BJ (cell line): ENCODE measurements at regions of chr2 and their contacts with region 1.

Region 1: DNA sequence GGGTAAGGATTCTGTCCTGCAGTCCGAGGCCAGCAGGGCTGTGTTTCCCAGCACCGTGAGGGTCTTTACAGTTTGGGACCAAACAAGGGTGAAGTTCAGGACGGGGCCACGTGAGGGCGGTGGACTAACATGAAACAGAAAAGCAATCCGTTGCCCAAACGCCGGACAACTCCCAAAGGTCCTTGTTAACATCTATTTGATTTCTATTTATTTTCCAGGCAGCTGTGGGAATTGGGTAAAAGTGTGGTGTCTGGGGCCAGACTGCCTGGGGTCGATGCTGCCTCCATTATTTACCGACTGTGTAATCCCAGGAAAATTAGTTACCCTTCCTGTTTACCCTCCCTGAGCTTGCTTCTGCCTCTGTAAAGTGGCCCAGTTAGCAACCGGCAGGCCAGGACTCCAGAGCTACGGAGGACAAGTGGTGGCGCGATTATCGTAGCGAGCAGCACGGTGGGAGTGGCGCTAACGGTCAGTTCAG is 66.3 kb upstream of the TCF7L1 start:
- DNase-seq: peak; percentile 9
- H3K4me3 ChIP-seq: no peak overlapping the region; the same call in 1 of the 2 replicates
- H3K27me3 ChIP-seq: peaks cover 4% of the 10 kb centered on the region; the same call in 1 of the 2 replicates
- CTCF ChIP-seq: peak; percentile 87

Region 2: DNA sequence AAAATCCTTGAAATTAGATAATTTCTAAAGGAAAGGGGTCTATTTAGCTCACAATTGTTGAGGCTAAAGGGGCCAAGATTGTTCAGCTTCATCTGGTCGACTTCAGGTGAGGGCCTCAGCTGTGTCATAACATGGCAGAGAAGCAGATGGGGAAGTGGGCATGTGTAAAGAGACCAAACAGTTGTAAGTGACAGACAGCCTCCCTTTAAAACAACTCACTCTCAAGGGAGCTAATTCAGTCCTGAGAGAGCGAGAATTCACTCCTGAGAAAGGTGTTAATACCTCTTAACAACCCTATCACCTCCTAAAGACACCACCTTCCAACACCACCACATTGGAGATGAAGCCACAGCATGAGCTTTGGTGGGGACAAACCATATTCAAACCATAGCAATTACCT is 33.5 kb before region 1 on chr2:
- CTCF ChIA-PET with region 1: interaction called, 15 read pairs
- POLR2A ChIA-PET with region 1: no interaction called
- DNase-seq: no peak
- H3K4me3 ChIP-seq: no peak overlapping the region
- H3K27me3 ChIP-seq: no peaks in the 10 kb centered on the region
- CTCF ChIP-seq: no peak

Region 3: DNA sequence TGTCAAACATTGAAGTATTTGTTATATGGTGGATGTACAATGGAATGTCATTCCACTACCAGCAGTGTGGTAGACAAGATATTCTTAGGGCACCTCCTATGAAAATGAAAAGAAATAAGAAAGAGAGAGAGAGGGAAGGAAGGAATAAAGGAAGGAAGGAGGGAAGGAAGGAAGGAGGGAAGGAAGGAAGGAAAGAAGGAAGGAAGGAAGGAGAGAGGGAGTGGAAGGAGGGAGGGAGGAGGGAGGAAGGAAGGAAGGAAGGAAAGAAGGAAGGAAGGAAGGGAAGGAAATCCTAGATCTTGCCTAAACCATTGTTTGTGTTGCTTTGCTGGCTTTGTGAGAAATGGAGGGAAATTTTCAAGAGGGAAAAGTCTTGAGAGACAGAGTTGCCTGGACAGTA is 16.2 kb after region 1 on chr2:
- CTCF ChIA-PET with region 1: interaction called, 31 read pairs
- POLR2A ChIA-PET with region 1: no interaction called
- DNase-seq: no peak
- H3K4me3 ChIP-seq: no peak overlapping the region
- H3K27me3 ChIP-seq: peaks cover 3% of the 10 kb centered on the region
- CTCF ChIP-seq: no peak

Region 4: GRCh38 chr2:85215448-85216401 is 148.8 kb after region 1 on chr2:
- CTCF ChIA-PET with region 1: no interaction called
- POLR2A ChIA-PET with region 1: no interaction called
- DNase-seq: peak; percentile 80
- H3K4me3 ChIP-seq: no peak overlapping the region
- H3K27me3 ChIP-seq: 0 out of 2 replicates have a peak, but pooled peaks cover 2% of the 10 kb centered on the region
- CTCF ChIP-seq: no peak

Region 5: DNA sequence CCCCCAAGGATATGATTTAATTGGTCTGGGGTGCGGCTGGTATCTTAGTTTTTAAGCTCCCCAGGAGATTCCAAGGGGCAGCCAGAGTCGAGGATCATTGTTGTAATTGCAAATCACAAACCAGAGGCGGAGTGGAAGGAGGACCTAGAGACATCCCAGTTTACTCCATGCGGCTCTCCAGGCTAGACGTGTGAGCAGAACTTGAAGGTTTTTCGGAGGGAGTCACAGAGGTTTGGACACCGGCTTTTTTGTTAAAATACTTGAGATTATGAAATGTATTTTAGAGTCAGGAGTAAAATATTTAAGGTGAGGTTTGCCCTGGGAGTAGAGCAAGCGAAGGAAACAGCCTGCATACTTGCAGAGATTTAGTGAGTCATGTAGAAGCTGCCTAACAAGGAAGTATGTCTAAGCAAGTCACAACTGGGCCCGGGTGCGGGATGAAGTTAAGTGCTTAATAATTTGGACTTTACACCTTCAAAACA is 221.4 kb after region 1 on chr2:
- CTCF ChIA-PET with region 1: interaction called, 129 read pairs
- POLR2A ChIA-PET with region 1: no interaction called
- DNase-seq: no peak
- H3K4me3 ChIP-seq: no peak overlapping the region
- H3K27me3 ChIP-seq: no peaks in the 10 kb centered on the region
- CTCF ChIP-seq: no peak

Region 6: GRCh38 chr2:85308896-85309555 is 242.1 kb after region 1 on chr2:
- CTCF ChIA-PET with region 1: interaction called, 195 read pairs
- POLR2A ChIA-PET with region 1: interaction called, 3 read pairs
- DNase-seq: no peak
- H3K4me3 ChIP-seq: no peak overlapping the region
- H3K27me3 ChIP-seq: no peaks in the 10 kb centered on the region
- CTCF ChIP-seq: no peak